ENCODE measurements at regions of chr1 and their contacts with region 1.

Region 1: DNA sequence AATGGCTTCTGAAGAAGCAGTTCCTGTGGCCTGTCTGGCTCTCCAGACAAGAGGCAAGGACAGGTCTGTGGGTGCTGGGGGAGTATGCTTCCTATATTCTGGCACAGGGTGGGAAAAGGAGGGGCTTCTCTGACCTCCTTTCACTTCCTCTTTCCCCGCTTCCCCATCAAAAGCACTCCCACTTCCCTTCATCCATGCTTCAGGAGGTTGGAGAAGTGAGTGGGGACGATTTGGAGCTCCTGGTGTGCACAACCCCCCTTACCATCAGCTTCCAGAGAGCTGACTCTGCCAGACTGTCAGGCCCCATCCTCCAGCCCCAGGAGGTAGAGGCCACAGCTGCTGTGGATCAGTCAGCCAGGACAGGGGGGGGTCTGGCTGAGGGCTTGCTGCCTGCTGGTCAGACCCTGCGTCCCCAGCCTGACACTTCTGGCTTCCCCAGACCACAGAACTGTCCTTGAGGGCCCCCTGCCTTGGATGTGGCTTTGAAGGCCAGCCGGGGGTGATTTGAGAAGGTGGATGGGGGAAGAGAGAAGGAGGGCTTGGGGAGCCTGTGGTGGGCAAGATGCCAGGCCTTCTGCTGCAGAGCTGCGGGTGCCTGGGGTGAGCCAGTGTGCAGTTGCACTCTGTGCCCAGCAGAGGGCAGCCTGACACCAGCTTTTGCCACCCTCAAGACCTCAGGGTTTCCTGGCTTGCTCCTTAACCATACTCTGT is 21.5 kb upstream of the TMEM222 start:
- DNase-seq: peak; percentile 85
- H3K4me3 Mint-ChIP-seq: no peak overlapping the region
- H3K27ac Mint-ChIP-seq: peak overlapping the region; percentile 67
- H3K4me1 Mint-ChIP-seq: peaks cover 13% of the 10 kb centered on the region
- H3K27me3 Mint-ChIP-seq: no peaks in the 10 kb centered on the region
- CTCF ChIP-seq: peak; percentile 99

Region 2: DNA sequence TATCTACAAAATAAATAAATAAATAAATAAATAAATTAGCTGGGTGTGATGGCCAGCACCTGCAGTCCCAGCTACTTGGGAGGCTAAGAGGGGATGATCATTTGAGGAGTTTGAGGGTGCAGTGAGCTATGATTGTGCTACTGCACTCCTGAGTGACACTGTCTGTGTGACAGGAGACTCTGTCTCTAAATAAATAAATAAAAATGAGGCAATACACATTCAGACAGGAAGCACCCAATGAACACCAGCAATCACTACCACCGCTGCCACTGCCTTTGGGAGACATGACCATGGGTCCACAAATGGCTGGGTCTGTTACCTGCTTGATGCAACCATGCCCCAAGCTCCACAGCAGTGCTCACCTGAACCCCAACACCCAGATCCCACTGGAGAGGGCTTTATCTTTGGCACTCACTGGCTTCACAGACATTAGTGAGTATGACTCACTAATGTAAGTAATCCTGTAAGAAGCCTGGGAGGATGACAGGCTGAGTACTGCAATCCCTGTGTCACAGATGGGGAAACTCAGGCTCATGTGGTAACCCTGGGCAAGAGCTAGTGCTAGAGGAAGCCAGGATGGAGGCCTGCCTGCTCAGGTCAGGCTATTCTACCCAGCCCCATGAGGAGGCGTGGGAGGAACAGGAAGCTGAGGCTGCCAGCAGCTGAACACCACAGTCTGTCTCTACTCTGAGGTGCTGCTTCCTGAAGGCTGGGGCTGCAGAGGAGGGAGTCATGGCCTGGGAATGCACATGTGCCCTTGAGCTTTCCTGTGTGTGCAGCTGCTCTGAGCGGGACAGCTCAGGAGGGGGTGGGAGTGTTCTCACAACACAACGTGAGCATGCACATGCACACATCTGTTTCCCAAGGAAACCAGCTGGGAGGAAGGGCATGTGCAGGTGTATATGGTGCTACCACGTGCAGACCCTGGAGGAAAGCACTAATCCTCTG is 188.6 kb before region 1 on chr1:
- CTCF ChIA-PET with region 1: interaction called, 119 read pairs
- POLR2A ChIA-PET with region 1: interaction called, 6 read pairs
- intact Hi-C with region 1: no loop called
- DNase-seq: peak; percentile 99
- H3K4me3 Mint-ChIP-seq: peak overlapping the region; percentile 46
- H3K27ac Mint-ChIP-seq: peak overlapping the region; percentile 74
- H3K4me1 Mint-ChIP-seq: peaks cover 31% of the 10 kb centered on the region
- H3K27me3 Mint-ChIP-seq: no peaks in the 10 kb centered on the region
- CTCF ChIP-seq: peak; percentile 20

Region 3: GRCh38 chr1:27314169-27314568 is 13.7 kb after region 1 on chr1:
- CTCF ChIA-PET with region 1: interaction called, 32 read pairs
- POLR2A ChIA-PET with region 1: interaction called, 12 read pairs
- intact Hi-C with region 1: no loop called
- DNase-seq: no peak
- H3K4me3 Mint-ChIP-seq: no peak overlapping the region
- H3K27ac Mint-ChIP-seq: no peak overlapping the region
- H3K4me1 Mint-ChIP-seq: no peaks in the 10 kb centered on the region
- H3K27me3 Mint-ChIP-seq: no peaks in the 10 kb centered on the region
- CTCF ChIP-seq: no peak

Region 4: DNA sequence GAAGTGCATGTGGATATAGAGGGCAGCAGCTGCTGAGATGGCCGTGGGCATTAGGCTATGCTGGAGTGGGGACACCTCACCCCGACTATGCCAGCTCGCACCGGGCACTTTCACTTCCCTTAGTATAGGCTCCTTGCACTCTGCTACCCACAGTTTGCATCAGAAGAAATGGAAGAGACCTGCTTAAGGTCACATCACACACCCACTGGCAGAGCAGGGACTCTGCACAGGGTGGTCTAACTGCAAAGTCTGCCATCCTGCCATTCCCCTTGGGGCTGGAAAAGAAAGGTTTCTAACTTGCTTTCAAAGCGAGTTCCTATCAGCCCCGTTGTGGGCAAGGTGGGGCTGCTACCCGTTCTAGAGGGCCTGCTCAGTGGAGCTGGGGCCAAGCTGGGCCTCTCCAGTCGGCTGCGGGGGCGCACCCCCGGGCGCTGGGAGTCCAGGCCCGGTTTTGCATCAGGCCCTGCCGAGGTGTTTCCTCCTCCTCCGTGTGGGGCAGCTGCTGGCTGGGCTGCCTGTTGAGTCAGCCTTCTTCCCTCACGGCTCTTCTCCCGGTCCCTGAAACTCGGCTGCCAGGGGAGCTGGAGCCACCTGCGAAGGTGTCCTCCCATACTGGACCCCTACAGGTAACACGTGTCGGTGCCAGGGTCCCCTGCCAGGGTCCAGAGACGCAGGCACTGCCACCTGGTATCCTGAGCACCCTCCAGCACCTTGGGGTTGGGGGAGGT is 41.2 kb after region 1 on chr1 and contains the start of gene SYTL1:
- CTCF ChIA-PET with region 1: interaction called, 14 read pairs
- POLR2A ChIA-PET with region 1: interaction called, 28 read pairs
- intact Hi-C with region 1: no loop called
- DNase-seq: peak; percentile 89
- H3K4me3 Mint-ChIP-seq: peak within 1 kb of the TSS; percentile 82
- H3K27ac Mint-ChIP-seq: peak within 1 kb of the TSS; percentile 95
- H3K4me1 Mint-ChIP-seq: peaks cover 46% of the 10 kb centered on the region
- H3K27me3 Mint-ChIP-seq: no peaks in the 10 kb centered on the region
- CTCF ChIP-seq: no peak
- total RNA-seq, gene SYTL1: 64.8 and 81.8 TPM in 2 replicates

Region 5: GRCh38 chr1:27392096-27392777 is 91.7 kb after region 1 on chr1 and contains the start of gene GPR3:
- CTCF ChIA-PET with region 1: interaction called, 225 read pairs
- POLR2A ChIA-PET with region 1: interaction called, 15 read pairs
- intact Hi-C with region 1: loop called (anchors 1 kb)
- DNase-seq: peak; percentile 90
- H3K4me3 Mint-ChIP-seq: peak within 1 kb of the TSS; percentile 72
- H3K27ac Mint-ChIP-seq: peak within 1 kb of the TSS; percentile 53
- H3K4me1 Mint-ChIP-seq: peaks cover 18% of the 10 kb centered on the region
- H3K27me3 Mint-ChIP-seq: no peaks in the 10 kb centered on the region
- CTCF ChIP-seq: peak; percentile 53
- total RNA-seq, gene GPR3: 0.47 and 0.65 TPM in 2 replicates

Region 6: DNA sequence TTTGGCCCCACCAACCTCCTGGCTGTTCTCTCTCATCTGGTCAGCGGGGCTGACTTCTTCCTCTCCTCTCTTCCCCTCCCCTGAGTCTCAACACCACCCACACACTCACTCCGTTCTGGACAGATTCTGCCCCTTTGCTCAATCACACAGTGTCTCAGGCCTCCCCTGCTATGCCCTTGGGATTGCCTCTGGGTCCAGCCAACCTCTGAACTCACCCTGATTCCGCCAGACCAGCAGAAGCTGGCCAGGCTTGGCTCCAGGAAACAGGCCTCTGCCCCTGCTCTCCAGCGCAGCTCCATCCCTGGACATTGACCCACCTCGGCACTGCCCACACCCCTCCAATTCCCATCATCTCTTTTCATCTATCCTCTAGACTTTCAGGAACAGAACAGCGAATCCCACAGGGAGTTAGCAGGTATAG is 281.3 kb after region 1 on chr1:
- CTCF ChIA-PET with region 1: no interaction called
- POLR2A ChIA-PET with region 1: no interaction called
- intact Hi-C with region 1: no loop called
- DNase-seq: no peak
- H3K4me3 Mint-ChIP-seq: no peak overlapping the region
- H3K27ac Mint-ChIP-seq: no peak overlapping the region
- H3K4me1 Mint-ChIP-seq: peaks cover 24% of the 10 kb centered on the region
- H3K27me3 Mint-ChIP-seq: no peaks in the 10 kb centered on the region
- CTCF ChIP-seq: no peak

Measured in MCF 10A (cell line).